Natural killer cell (primary cell): ENCODE measurements at regions of chr15 and their contacts with region 1.

Region 1: GRCh38 chr15:64825431-64826294 is at the start of gene PIF1:
- DNase-seq: peak; percentile 78 to 97
- ATAC-seq: peak; percentile 90 to 99 (median 93)
- H3K4me3 ChIP-seq: peak within 1 kb of the TSS; percentile 30
- H3K4me3 Mint-ChIP-seq: peak within 1 kb of the TSS; percentile 89
- H3K27ac ChIP-seq: peak within 1 kb of the TSS; percentile 37
- H3K27ac Mint-ChIP-seq: peak within 1 kb of the TSS; percentile 70 to 73
- H3K4me1 ChIP-seq: peaks cover 34% of the 10 kb centered on the region
- H3K4me1 Mint-ChIP-seq: peaks cover 33 to 41% of the 10 kb centered on the region in 2 donors
- H3K27me3 ChIP-seq: no peaks in the 10 kb centered on the region
- H3K27me3 Mint-ChIP-seq: no peaks in the 10 kb centered on the region
- CTCF ChIP-seq: no peak
- total RNA-seq, gene PIF1: 6.2 to 23.9 (median 9.7) TPM

Region 2: GRCh38 chr15:64836023-64836536 is 10.4 kb after region 1 on chr15:
- intact Hi-C with region 1: loop called (anchors 1 kb)
- DNase-seq: no peak
- ATAC-seq: peak in 2 of 3 donors; percentile 2 to 7
- H3K4me3 ChIP-seq: no peak overlapping the region
- H3K4me3 Mint-ChIP-seq: peak overlapping the region; percentile 67
- H3K27ac ChIP-seq: peak overlapping the region; percentile 21
- H3K27ac Mint-ChIP-seq: peak overlapping the region; percentile 80 to 84
- H3K4me1 ChIP-seq: peaks cover 37% of the 10 kb centered on the region
- H3K4me1 Mint-ChIP-seq: peaks cover 53 to 55% of the 10 kb centered on the region in 2 donors
- H3K27me3 ChIP-seq: no peaks in the 10 kb centered on the region
- H3K27me3 Mint-ChIP-seq: no peaks in the 10 kb centered on the region
- CTCF ChIP-seq: peak; percentile 51

Region 3: GRCh38 chr15:64893481-64894394 is 68.1 kb after region 1 on chr15:
- intact Hi-C with region 1: loop called (anchors 1 kb)
- DNase-seq: peak; percentile 82 to 95
- ATAC-seq: peak; percentile 61 to 80 (median 72)
- H3K4me3 ChIP-seq: peak overlapping the region; percentile 23
- H3K4me3 Mint-ChIP-seq: peak overlapping the region; percentile 84
- H3K27ac ChIP-seq: peak overlapping the region; percentile 90
- H3K27ac Mint-ChIP-seq: peak overlapping the region; percentile 98 to 99
- H3K4me1 ChIP-seq: peaks cover 73% of the 10 kb centered on the region
- H3K4me1 Mint-ChIP-seq: peaks cover 66 to 72% of the 10 kb centered on the region in 2 donors
- H3K27me3 ChIP-seq: no peaks in the 10 kb centered on the region
- H3K27me3 Mint-ChIP-seq: no peaks in the 10 kb centered on the region
- CTCF ChIP-seq: no peak